GM12878 (cell line): ENCODE measurements at regions of chr7 and their contacts with region 1.

Region 1: DNA sequence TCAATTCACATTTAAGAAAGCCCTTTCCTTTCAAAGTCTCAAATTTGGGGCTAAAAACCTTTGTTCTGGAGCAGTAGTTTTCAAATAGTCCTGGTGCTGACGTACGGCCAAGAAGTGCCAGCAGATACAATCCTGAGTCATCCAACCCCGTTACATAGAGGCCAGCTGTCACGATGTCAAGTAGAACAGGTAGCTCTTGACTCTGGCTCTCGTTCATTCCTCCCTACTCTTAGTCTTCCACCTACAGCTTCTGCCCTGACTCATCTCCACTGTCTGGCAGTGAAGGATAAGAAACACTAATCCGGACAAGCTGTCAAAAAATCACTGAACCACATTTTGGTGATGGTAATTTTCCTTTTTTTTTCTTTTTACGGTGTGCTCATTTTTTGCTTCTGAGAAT is 132.4 kb upstream of the PTN start:
- DNase-seq: no peak
- ATAC-seq: no peak
- H3K4me3 ChIP-seq: no peak overlapping the region
- H3K27ac ChIP-seq: no peak overlapping the region
- H3K4me1 ChIP-seq: no peaks in the 10 kb centered on the region
- H3K27me3 ChIP-seq: no peaks in the 10 kb centered on the region; a peak in 1 of 4 replicates
- CTCF ChIP-seq: no peak
- EP300 ChIP-seq: no peak
- POLR2A ChIP-seq: no peak
- RAD21 ChIP-seq: no peak

Region 2: DNA sequence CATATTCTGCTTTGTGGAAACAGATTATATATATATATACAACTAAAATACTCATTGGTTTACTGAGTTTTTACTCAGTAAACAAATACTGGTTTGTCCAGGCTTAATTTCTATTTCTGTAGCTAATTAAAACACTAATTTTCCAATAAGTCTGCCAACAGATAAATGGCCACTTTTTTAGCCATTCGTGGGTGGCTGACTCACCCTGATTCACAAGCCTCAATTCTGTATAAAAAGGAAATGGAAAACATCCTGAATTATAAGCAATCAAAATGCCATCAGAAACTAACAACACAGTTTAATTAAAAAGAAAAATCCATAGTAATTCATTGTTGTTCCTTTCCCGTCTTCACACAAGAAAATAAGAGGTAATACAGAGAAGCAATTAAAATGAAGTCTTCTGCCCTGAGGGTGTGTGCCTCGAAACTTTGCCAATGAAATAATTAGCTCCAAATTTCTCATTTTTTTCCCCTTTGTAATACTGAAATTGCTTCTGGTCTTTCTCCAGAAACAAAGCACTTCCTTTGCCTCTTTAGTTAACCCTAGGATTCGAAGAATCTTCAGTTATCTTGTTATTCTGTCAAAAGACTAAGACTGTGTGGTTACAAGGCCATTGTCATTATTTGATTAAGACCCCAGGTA is 13.8 kb before region 1 on chr7:
- CTCF ChIA-PET with region 1: interaction called, 6 read pairs
- POLR2A ChIA-PET with region 1: no interaction called
- RAD21 ChIA-PET with region 1: interaction called, 6 read pairs
- SMC1A ChIA-PET with region 1: interaction called, 15 read pairs
- in situ Hi-C with region 1: no loop called
- intact Hi-C with region 1: no loop called
- DNase-seq: no peak
- ATAC-seq: no peak
- H3K4me3 ChIP-seq: no peak overlapping the region
- H3K27ac ChIP-seq: no peak overlapping the region
- H3K4me1 ChIP-seq: no peaks in the 10 kb centered on the region
- H3K27me3 ChIP-seq: no peaks in the 10 kb centered on the region; a peak in 1 of 4 replicates
- CTCF ChIP-seq: no peak
- EP300 ChIP-seq: no peak
- POLR2A ChIP-seq: no peak
- RAD21 ChIP-seq: no peak

Region 3: DNA sequence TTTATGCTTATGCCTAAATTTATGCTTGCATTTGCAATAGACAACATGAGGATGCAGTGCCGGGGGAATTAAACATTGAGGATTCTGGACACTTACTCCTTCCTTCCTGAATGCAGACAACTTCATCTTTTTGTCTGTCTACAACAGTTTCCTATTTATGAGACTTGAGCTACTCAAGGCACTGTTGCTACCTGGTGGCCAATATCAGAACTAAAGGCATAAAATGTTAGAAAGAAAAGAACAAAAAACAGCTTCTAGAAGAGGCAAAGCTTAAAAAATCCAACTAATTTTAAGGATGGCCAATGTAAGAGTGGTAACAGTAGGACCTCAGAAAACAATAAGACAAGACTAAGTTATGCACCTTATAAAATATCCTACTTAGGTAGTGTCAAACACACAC is 12.1 kb after region 1 on chr7:
- CTCF ChIA-PET with region 1: interaction called, 7 read pairs
- POLR2A ChIA-PET with region 1: no interaction called
- RAD21 ChIA-PET with region 1: interaction called, 4 read pairs
- SMC1A ChIA-PET with region 1: interaction called, 13 read pairs
- in situ Hi-C with region 1: no loop called
- intact Hi-C with region 1: no loop called
- DNase-seq: no peak
- ATAC-seq: no peak
- H3K4me3 ChIP-seq: no peak overlapping the region
- H3K27ac ChIP-seq: no peak overlapping the region
- H3K4me1 ChIP-seq: no peaks in the 10 kb centered on the region
- H3K27me3 ChIP-seq: no peaks in the 10 kb centered on the region
- CTCF ChIP-seq: no peak
- EP300 ChIP-seq: no peak
- POLR2A ChIP-seq: no peak
- RAD21 ChIP-seq: peak; percentile 18; the same call in 1 of the 2 replicates